ENCODE measurements at regions of chr14 and their contacts with region 1.

Region 1: GRCh38 chr14:57692671-57693070 is 173.2 kb downstream of the SLC35F4 start:
- ATAC-seq: peak in 3 of 8 experiments; percentile 59 to 72 (median 69)
- H3K4me3 ChIP-seq: no peak overlapping the region
- H3K27ac ChIP-seq: no peak overlapping the region
- H3K4me1 ChIP-seq: peaks cover 0 to 1% of the 10 kb centered on the region in 2 donors

Region 2: DNA sequence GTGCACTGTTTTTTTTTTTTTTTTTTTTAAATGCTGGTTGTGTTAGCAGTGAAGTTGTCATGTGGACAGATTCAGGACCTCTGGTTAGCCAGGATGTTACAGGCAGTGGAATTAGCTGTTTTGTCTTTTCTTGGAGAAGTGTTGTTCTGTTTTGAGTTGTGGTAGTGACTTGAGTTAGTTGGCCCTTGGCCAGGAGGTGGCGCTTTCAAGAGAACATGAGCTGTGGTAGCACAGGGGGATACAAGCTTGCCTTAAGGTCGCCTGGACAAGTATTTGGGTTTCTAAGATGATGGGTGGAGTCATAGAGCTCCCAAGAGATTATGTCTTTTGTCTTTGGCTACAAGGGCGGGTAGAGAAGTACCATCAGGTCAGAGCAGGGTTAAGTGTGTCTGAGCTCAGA is 165.7 kb before region 1 on chr14:
- in situ Hi-C with region 1: no loop called
- ATAC-seq: no peak
- H3K4me3 ChIP-seq: no peak overlapping the region
- H3K27ac ChIP-seq: no peak overlapping the region
- H3K4me1 ChIP-seq: no peaks in the 10 kb centered on the region

Region 3: GRCh38 chr14:57871459-57872080 is 178.9 kb after region 1 on chr14:
- in situ Hi-C with region 1: loop called in 1 of 9 experiments (anchors 10 kb)
- ATAC-seq: peak; percentile 35 to 71 (median 42)
- H3K4me3 ChIP-seq: no peak overlapping the region
- H3K27ac ChIP-seq: no peak overlapping the region
- H3K4me1 ChIP-seq: peaks cover 0 to 4% of the 10 kb centered on the region in 2 donors

Region 4: GRCh38 chr14:58072288-58073071 is 379.8 kb after region 1 on chr14:
- in situ Hi-C with region 1: loop called in 1 of 9 experiments (anchors 25 kb)
- ATAC-seq: peak; percentile 62 to 89 (median 82)
- H3K4me3 ChIP-seq: no peak overlapping the region
- H3K27ac ChIP-seq: no peak overlapping the region
- H3K4me1 ChIP-seq: no peaks in the 10 kb centered on the region

Measured in motor neuron (in vitro differentiated cells).